Activated CD4-positive, alpha-beta T cell treated with anti-CD3 and anti-CD28 coated beads for 36 hours (primary cell): ENCODE measurements at regions of chr3 and their contacts with region 1.

Region 1: DNA sequence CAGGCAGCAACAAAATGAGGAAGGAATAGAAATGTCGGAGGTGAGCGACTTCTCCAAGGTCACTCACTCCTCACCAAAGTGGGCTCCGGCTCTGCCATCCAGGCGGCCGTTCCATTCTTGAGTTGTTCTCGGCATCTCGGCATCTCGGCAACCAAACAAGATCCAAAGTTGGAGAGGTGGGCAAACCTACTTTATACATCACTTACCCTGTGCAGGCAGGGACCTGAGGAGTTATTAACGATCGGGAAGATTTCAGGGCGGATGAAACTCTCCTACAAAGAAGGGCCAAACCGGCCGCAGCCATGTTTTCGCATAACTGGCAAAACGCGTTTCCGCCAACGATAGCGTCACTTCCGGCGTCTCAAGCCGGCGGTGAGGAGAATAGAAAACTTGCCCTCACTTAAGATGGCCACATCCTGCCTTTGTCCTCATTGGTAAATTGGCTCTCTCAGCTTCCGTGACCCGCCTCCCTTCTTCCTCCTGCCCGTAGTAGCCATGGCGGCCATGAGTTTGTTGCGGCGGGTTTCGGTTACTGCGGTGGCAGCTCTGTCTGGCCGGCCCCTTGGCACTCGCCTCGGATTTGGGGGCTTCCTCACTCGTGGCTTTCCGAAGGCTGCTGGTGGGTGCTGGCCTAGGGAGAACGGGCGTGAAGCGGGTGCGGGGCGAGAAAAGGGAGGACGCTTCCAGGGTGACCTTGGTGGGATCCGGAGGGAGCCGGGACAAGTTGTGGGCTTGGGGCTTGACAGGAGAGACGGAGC is at the starts of genes MRPL47 and NDUFB5:
- DNase-seq: peak; percentile 95
- ATAC-seq: peak; percentile 92
- H3K4me3 Mint-ChIP-seq: peak within 1 kb of the TSS; percentile 92
- H3K27ac Mint-ChIP-seq: peak within 1 kb of the TSS; percentile 100
- H3K4me1 Mint-ChIP-seq: peaks cover 37% of the 10 kb centered on the region
- H3K27me3 Mint-ChIP-seq: no peaks in the 10 kb centered on the region
- total RNA-seq, gene MRPL47: 49.8 to 56.4 TPM
- total RNA-seq, gene NDUFB5: 105 to 110 TPM

Region 2: GRCh38 chr3:179071550-179072397 is 532.7 kb before region 1 on chr3 and contains the start of gene ZMAT3:
- CTCF ChIA-PET with region 1: no interaction called
- POLR2A ChIA-PET with region 1: no interaction called
- intact Hi-C with region 1: loop called in 1 of 2 experiments (anchors 1 kb)
- DNase-seq: peak; percentile 90
- ATAC-seq: peak; percentile 86
- H3K4me3 Mint-ChIP-seq: peak within 1 kb of the TSS; percentile 95
- H3K27ac Mint-ChIP-seq: peak within 1 kb of the TSS; percentile 92
- H3K4me1 Mint-ChIP-seq: peaks cover 41% of the 10 kb centered on the region
- H3K27me3 Mint-ChIP-seq: no peaks in the 10 kb centered on the region
- total RNA-seq, gene ZMAT3: 9.5 to 9.9 TPM

Region 3: GRCh38 chr3:179653096-179653797 is 48.7 kb after region 1 on chr3:
- CTCF ChIA-PET with region 1: interaction called, 5 read pairs
- POLR2A ChIA-PET with region 1: interaction called, 3 read pairs
- intact Hi-C with region 1: loop called (anchors 1 to 2 kb)
- DNase-seq: peak; percentile 81
- ATAC-seq: peak; percentile 69
- H3K4me3 Mint-ChIP-seq: peak overlapping the region; percentile 81
- H3K27ac Mint-ChIP-seq: peak overlapping the region; percentile 82
- H3K4me1 Mint-ChIP-seq: peaks cover 22% of the 10 kb centered on the region
- H3K27me3 Mint-ChIP-seq: peaks cover 7% of the 10 kb centered on the region

Region 4: GRCh38 chr3:180912304-180913296 is 1308.1 kb after region 1 on chr3 and contains the start of gene FXR1:
- CTCF ChIA-PET with region 1: no interaction called
- POLR2A ChIA-PET with region 1: no interaction called
- intact Hi-C with region 1: loop called in 1 of 2 experiments (anchors 2 kb)
- DNase-seq: peak; percentile 96
- ATAC-seq: peak; percentile 97
- H3K4me3 Mint-ChIP-seq: peak within 1 kb of the TSS; percentile 98
- H3K27ac Mint-ChIP-seq: peak within 1 kb of the TSS; percentile 98
- H3K4me1 Mint-ChIP-seq: peaks cover 48% of the 10 kb centered on the region
- H3K27me3 Mint-ChIP-seq: no peaks in the 10 kb centered on the region
- total RNA-seq, gene FXR1: 175 to 186 TPM